ENCODE measurements at regions of chr3 and their contacts with region 1.

Region 1: DNA sequence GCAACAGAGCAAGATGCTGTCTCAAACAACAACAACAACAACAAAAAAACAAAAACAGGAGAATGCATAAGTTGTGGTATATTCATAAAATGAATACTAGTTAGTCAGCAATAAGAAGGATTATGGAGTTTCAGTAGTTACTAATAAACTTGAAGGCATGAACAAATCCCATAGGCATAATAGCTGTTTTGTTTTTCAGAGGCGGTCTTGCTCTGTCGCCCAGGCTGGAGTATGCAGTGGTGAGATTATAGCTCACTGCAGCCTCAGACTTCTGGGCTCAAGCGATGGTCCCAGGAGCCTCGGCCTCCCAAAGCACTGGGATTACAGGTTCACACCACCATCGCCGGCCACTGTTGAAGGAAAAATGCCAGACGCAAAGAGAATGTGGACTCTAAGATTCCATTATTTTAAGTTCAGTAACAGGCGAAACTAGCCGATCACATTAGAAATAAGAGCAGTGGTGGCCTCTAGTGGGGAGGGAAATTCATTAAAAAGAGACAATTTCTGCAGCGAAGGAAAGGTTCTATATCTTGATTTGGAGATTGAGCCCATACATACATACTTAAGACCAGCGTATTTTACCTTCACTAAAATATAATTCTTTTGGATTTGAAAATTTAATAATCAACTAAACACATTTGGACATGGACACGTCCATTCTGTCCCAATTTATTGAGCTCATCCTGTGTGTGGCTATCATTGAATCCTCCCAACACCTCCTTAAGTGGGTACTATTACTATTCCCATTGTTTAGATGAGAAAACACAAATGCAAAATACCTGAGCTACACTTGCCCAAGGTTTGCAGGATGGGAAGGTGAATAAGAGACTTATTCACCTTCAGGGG is 27.4 kb upstream of the HDAC11 start:
- DNase-seq: peak in 1 of 2 donors; percentile 48
- ATAC-seq: peak; percentile 77
- H3K4me3 ChIP-seq: no peak overlapping the region
- H3K27ac ChIP-seq: peak overlapping the region in 1 of 2 donors; percentile 69
- H3K4me1 ChIP-seq: no peaks in the 10 kb centered on the region
- H3K27me3 ChIP-seq: no peaks in the 10 kb centered on the region

Region 2: GRCh38 chr3:13091898-13092611 is 360.7 kb before region 1 on chr3:
- intact Hi-C with region 1: loop called (anchors 2 kb)
- DNase-seq: peak; percentile 86 to 93
- ATAC-seq: peak; percentile 84
- H3K4me3 ChIP-seq: no peak overlapping the region
- H3K27ac ChIP-seq: no peak overlapping the region
- H3K4me1 ChIP-seq: no peaks in the 10 kb centered on the region
- H3K27me3 ChIP-seq: no peaks in the 10 kb centered on the region

Region 3: GRCh38 chr3:13308380-13308801 is 144.3 kb before region 1 on chr3:
- intact Hi-C with region 1: loop called (anchors 5 to 10 kb)
- DNase-seq: peak in 1 of 2 donors; percentile 65
- ATAC-seq: no peak
- H3K4me3 ChIP-seq: no peak overlapping the region
- H3K27ac ChIP-seq: no peak overlapping the region
- H3K4me1 ChIP-seq: no peaks in the 10 kb centered on the region
- H3K27me3 ChIP-seq: no peaks in the 10 kb centered on the region

Region 4: GRCh38 chr3:13379201-13379830 is 73.4 kb before region 1 on chr3:
- intact Hi-C with region 1: loop called in 1 of 2 experiments (anchors 5 kb)
- DNase-seq: peak; percentile 71 to 87
- ATAC-seq: peak; percentile 78
- H3K4me3 ChIP-seq: no peak overlapping the region
- H3K27ac ChIP-seq: peak overlapping the region; percentile 16 to 94
- H3K4me1 ChIP-seq: peaks cover 0 to 2% of the 10 kb centered on the region in 2 donors
- H3K27me3 ChIP-seq: no peaks in the 10 kb centered on the region

Region 5: GRCh38 chr3:13548696-13549622 is 96.2 kb after region 1 on chr3 and contains the start of gene FBLN2:
- intact Hi-C with region 1: no loop called
- DNase-seq: peak in 1 of 2 donors; percentile 83
- ATAC-seq: peak; percentile 78
- H3K4me3 ChIP-seq: no peak within 1 kb of the TSS
- H3K27ac ChIP-seq: no peak within 1 kb of the TSS
- H3K4me1 ChIP-seq: no peaks in the 10 kb centered on the region
- H3K27me3 ChIP-seq: no peaks in the 10 kb centered on the region
- total RNA-seq, gene FBLN2: 117 to 494 TPM

Region 6: DNA sequence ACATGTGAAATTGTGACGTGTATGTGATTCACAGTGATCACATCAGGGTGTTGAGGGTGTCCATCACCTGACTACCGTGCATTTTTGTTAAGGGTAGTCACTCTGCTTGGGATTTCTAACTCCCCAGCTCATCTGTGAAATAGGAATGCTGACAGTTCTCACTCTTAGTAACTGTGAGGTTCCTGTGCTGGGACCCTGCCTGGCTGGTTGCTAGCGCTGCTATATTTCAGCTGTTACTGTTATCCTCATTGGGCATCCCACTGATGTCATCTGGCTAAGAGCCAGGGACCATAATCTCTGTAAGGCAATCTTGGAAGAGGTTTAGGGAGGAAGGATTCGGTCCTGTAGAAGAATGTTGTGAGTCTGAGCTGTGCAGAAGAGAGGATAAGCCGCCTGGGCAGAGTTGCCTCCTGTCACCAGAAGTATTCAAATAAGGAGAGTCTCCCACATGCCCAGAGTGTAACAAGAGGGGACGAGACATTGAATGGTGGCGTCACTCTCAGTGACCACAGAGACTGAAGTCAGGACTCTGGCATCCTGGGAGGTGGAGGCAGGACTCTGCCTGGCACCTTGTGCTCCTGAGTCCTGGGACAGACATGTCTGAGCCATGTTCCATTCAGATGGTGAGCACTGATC is 148.3 kb after region 1 on chr3:
- intact Hi-C with region 1: no loop called
- DNase-seq: peak in 1 of 2 donors; percentile 40
- ATAC-seq: no peak
- H3K4me3 ChIP-seq: no peak overlapping the region
- H3K27ac ChIP-seq: no peak overlapping the region
- H3K4me1 ChIP-seq: no peaks in the 10 kb centered on the region
- H3K27me3 ChIP-seq: no peaks in the 10 kb centered on the region

Region 7: GRCh38 chr3:13647298-13648059 is 194.8 kb after region 1 on chr3:
- intact Hi-C with region 1: no loop called
- DNase-seq: peak in 1 of 2 donors; percentile 71
- ATAC-seq: no peak
- H3K4me3 ChIP-seq: no peak overlapping the region
- H3K27ac ChIP-seq: no peak overlapping the region
- H3K4me1 ChIP-seq: no peaks in the 10 kb centered on the region
- H3K27me3 ChIP-seq: no peaks in the 10 kb centered on the region

Measured in aorta (tissue), 5 donors.